Sigmoid colon (tissue), 7 donors: ENCODE measurements at regions of chr17 and their contacts with region 1.

Region 1: DNA sequence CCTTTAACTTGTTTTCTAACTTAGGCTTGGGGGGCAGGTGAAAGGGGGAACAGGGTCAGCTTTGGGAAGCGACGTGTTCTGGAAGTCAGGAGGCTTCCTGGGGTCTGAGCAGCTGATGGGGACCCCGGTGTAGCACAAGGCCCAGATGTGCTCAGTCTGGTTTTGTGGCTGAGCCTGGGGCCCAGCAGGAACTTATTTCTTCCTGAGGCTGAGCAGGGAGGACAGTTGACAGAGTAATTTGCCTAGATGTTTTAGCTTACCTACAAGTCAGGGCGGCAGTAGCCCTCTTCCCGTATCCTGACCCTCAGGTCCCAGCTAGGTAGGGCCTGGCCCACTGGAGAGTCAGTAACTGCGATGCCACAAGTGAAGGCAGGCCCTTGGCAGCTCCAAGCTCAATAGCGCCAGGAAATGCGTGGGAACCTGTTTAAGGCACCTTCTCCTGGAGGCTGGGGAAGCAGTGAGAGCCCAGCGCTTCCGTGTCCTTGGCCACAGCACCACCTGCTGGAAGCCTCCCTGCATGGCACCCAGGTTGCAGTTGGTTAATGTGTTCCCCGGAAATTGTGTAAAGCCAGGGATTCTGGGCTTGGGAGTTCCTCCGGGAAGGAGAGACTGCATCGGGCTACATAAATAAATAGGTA is 5.2 kb downstream of the CCR7 start:
- DNase-seq: peak; percentile 96
- H3K4me3 ChIP-seq: no peak overlapping the region
- H3K27ac ChIP-seq: peak overlapping the region; percentile 20 to 71 (median 52)
- H3K4me1 ChIP-seq: peaks cover 0 to 44% (median 35%) of the 10 kb centered on the region in 4 donors
- H3K27me3 ChIP-seq: no peaks in the 10 kb centered on the region
- CTCF ChIP-seq: peak; percentile 96 to 99 (median 98)
- EP300 ChIP-seq: no peak
- POLR2A ChIP-seq: no peak

Region 2: DNA sequence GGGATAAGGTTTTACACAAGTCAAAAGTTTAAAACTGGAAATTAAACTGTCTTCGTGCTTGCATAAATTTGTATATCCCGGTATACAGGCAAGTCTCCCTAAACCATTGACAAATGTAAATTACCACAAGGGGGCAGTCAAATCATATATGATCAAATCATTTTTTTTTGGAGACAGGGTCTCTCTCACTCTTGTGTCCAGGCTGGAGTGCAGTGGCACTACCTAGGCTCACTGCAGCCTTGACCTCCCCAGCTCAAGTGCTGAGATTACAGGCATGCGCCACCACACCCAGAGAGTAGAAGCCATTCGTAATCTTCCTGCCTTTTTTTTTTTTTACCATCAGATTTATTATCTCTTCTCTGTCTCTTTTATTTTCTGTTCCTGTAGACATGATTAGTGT is 160.9 kb before region 1 on chr17:
- intact Hi-C with region 1: loop called (anchors 1 kb)
- DNase-seq: no peak
- H3K4me3 ChIP-seq: no peak overlapping the region
- H3K27ac ChIP-seq: no peak overlapping the region
- H3K4me1 ChIP-seq: no peaks in the 10 kb centered on the region
- H3K27me3 ChIP-seq: no peaks in the 10 kb centered on the region
- CTCF ChIP-seq: peak; percentile 44 to 60 (median 52)
- EP300 ChIP-seq: no peak
- POLR2A ChIP-seq: no peak

Region 3: DNA sequence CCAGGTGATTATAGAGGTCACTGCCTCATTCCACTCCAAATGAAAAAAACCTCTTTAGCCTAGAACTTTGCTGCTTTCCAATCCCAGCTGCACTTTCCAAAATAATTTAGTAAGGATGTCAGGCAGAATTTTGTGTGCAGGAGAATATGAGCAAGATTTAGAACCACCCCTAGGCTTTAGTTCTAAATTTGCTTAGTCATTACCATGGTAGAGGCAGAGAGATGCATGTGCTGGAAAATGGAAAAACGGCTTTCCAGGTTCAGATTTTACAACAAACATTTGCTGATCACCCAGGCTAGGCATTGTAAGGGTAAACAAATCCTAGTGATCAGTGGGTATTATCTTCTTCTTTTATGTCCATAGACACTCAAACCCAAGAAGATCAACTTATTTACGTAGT is 205.6 kb after region 1 on chr17:
- intact Hi-C with region 1: no loop called
- DNase-seq: no peak
- H3K4me3 ChIP-seq: no peak overlapping the region
- H3K27ac ChIP-seq: no peak overlapping the region
- H3K4me1 ChIP-seq: no peaks in the 10 kb centered on the region
- H3K27me3 ChIP-seq: no peaks in the 10 kb centered on the region
- CTCF ChIP-seq: no peak
- EP300 ChIP-seq: no peak
- POLR2A ChIP-seq: no peak